T-cell (primary cell): ENCODE measurements at regions of chr17 and their contacts with region 1.

Region 1: DNA sequence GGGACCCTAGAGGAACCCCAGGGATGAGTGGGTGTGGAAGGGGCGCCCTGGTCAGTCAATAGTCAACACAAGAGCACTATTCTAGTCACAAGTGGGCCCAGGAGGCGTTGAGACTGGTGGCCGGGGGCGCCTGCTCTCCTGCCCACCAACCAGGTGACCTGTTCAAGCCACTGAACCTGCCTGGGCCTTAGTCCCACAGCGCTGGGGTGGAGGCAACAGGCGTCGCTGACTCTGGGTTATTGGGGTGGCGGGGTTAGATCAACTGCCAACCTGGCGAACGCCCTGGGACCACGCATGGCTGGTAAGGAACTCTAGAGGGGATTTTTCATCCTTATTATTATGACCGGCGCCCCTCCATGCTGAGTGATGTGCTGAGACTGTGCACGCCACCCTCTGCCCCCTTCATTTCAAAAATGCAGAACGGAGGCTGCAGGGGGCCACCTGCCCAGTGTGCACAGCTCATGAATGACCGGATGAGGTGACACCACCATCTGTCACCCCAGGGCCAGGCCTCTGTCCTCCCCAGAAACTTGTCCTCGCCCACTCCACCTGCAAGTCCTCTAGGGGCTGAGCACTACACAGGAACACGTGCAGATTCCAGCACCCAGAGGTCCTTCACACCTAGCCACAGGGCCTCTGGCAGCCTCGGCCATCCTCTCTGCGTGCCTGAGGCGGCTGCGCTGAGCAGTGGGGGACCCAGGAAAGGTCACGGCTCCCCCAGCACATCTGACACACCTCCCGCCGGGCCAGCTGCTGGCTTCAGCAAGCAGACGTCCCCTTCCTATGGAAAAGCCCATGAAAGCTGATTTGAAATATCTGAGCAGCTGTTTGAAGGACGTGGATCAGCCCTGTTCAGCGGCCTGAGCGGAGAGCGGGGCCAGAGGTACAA is 51.6 kb upstream of the DNAH17 start:
- DNase-seq: no peak
- ATAC-seq: no peak
- H3K4me3 ChIP-seq: no peak overlapping the region
- H3K4me3 Mint-ChIP-seq: no peak overlapping the region
- H3K27ac ChIP-seq: no peak overlapping the region
- H3K27ac Mint-ChIP-seq: no peak overlapping the region
- H3K4me1 ChIP-seq: peaks cover 0 to 26% of the 10 kb centered on the region in 2 experiments
- H3K4me1 Mint-ChIP-seq: peaks cover 16 to 24% (median 21%) of the 10 kb centered on the region in 3 donors
- H3K27me3 ChIP-seq: peaks cover 0 to 7% of the 10 kb centered on the region in 2 experiments
- H3K27me3 Mint-ChIP-seq: no peaks in the 10 kb centered on the region

Region 2: DNA sequence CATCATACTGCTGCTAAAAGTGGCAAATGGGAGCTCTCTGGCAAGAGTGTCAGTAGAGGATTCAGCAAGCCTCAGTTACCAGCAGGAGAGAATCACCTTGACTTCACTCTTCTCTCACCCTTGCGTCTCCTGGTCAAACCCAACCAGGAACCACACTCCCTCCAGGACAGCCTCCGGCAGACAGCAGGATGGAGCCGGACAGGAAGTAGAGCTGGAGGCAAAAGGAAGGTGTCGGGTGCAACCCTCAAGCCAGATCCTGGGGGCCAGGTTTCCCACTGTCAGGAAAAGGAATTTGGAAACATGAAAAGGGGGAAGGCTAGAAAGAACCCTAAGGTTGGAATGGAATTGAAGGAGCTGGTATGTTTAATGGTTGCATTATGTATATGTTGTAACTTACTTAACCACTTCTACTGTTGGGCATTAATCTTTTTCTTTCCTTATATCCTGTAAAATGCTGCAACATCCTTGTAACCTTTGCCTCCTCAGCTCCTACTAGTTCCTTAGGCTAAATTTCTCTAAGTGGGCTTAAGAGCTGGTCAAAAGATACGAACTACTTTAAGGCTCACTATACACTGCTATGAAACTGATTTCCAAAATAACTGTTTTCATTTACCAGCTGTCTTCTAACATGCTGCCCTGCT is 113.0 kb after region 1 on chr17:
- CTCF ChIA-PET with region 1: no interaction called
- POLR2A ChIA-PET with region 1: interaction called in 1 of 2 experiments, 11 read pairs
- DNase-seq: no peak
- ATAC-seq: peak in 1 of 4 experiments; percentile 11
- H3K4me3 ChIP-seq: peak overlapping the region in 1 of 2 donors; percentile 45
- H3K4me3 Mint-ChIP-seq: peak overlapping the region; percentile 47 to 83 (median 71)
- H3K27ac ChIP-seq: peak overlapping the region; percentile 53
- H3K27ac Mint-ChIP-seq: peak overlapping the region; percentile 94 to 96
- H3K4me1 ChIP-seq: peaks cover 86 to 88% of the 10 kb centered on the region in 2 experiments
- H3K4me1 Mint-ChIP-seq: peaks cover 96 to 98% (median 97%) of the 10 kb centered on the region in 3 donors
- H3K27me3 ChIP-seq: no peaks in the 10 kb centered on the region
- H3K27me3 Mint-ChIP-seq: no peaks in the 10 kb centered on the region